ENCODE measurements at regions of chr9 and their contacts with region 1.

Region 1: GRCh38 chr9:123081824-123082223 is 48.4 kb downstream of the GPR21 start:
- DNase-seq: peak in 2 of 9 experiments; percentile 41 to 50
- ATAC-seq: no peak
- H3K4me3 ChIP-seq: no peak overlapping the region
- H3K4me3 Mint-ChIP-seq: no peak overlapping the region
- H3K27ac ChIP-seq: no peak overlapping the region
- H3K27ac Mint-ChIP-seq: no peak overlapping the region
- H3K4me1 ChIP-seq: no peaks in the 10 kb centered on the region
- H3K4me1 Mint-ChIP-seq: no peaks in the 10 kb centered on the region
- H3K27me3 ChIP-seq: no peaks in the 10 kb centered on the region
- H3K27me3 Mint-ChIP-seq: no peaks in the 10 kb centered on the region
- CTCF ChIP-seq: peak; percentile 60

Region 2: GRCh38 chr9:123225374-123225813 is 143.6 kb after region 1 on chr9:
- CTCF ChIA-PET with region 1: no interaction called
- POLR2A ChIA-PET with region 1: no interaction called
- intact Hi-C with region 1: loop called in 1 of 2 experiments (anchors 5 kb)
- DNase-seq: peak in 8 of 9 experiments; percentile 24 to 76 (median 48)
- ATAC-seq: peak; percentile 88
- H3K4me3 ChIP-seq: no peak overlapping the region
- H3K4me3 Mint-ChIP-seq: no peak overlapping the region
- H3K27ac ChIP-seq: no peak overlapping the region
- H3K27ac Mint-ChIP-seq: peak overlapping the region; percentile 8
- H3K4me1 ChIP-seq: peaks cover 14% of the 10 kb centered on the region
- H3K4me1 Mint-ChIP-seq: peaks cover 21% of the 10 kb centered on the region
- H3K27me3 ChIP-seq: no peaks in the 10 kb centered on the region
- H3K27me3 Mint-ChIP-seq: no peaks in the 10 kb centered on the region
- CTCF ChIP-seq: peak; percentile 44

Measured in CD8-positive, alpha-beta T cell (primary cell).